Cardiac septum (tissue), 1 donor: ENCODE measurements at regions of chr12 and their contacts with region 1.

Region 1: DNA sequence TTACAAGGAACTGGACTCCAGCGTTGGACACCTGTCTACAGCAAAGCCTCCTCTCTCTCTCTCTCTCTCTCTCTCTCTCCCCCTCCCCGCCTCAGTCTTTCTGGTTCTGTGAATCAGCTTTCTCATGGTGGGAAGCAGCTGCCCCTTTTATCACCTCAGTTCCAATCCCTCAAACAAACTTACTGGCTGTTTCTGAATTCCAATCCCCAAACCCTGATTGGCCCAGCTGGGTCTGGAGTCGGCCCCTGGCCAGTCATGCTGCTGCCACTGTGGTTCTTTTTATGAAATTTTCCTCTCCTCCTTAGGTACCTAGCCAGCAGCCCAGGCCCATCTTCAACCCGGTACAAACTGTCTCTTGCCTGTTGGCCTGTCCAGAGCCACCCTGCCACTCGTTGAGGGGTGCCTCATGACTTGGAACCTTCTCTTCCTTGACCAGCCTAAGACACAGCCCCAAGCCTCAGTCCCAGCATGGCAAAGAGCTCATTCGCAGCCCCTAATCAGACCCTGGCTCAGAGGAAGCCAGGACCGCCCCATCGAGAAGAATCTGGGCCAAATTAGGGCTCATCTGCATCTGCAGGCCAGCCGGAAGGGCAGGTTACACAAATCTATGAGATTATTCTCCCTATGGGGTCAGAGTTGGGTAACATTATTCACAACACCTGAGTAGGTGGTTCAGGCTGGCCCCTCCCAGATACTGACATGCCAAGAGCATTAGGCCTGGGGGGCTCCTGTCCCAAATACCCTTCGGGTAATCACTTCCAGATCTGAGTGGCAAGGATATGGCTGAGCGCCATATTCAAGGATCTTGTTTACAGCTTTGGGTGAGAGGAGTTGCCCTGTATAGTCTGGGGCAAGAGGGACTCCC is 9.5 kb upstream of the MORN3 start:
- DNase-seq: no peak

Region 2: DNA sequence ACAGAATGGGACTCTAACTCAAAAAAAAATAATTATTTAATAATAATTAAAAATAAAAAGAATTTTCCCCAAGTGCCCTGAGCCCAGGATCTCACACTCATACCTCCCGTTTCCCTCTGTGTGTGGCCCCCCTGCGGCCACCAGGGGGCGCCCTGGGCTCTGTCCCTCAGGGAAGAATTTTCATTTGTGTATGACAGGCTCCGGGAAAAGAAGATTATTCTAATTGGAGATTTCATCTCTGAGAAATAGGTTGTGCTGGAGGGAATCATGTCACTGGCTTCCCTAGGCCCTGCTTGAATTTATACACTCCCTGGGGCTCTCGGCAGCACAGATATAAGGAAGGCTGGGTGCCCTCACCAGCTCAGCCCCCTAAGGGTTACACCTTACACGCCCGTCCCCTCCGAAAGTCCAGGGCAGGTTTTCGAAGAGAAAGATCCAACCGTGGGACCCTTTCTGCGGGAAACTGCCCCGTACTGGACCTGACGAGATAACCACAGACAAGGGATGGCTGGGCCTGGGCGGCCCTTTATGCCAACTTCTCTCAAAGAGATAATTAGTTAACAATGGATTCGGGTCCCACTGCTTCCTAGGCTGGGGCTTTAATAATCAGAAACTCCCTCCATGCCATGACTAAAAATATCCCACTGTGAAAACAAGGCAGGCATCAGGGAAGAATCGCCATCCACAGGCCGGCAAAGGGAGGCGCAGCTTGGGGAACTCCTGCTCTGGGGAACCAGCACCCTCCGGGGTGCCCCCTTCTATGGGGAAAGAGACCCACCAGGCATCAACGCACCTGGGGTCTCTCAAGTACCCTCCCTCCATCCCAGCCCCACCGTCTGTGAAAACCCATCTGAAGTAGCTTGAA is 178.8 kb before region 1 on chr12:
- intact Hi-C with region 1: loop called (anchors 2 kb)
- DNase-seq: peak; percentile 90

Region 3: GRCh38 chr12:121550974-121551634 is 127.8 kb before region 1 on chr12:
- intact Hi-C with region 1: loop called (anchors 2 kb)
- DNase-seq: no peak

Region 4: GRCh38 chr12:121626087-121626852 is 52.7 kb before region 1 on chr12 and contains the start of gene ORAI1:
- intact Hi-C with region 1: loop called (anchors 5 kb)
- DNase-seq: peak; percentile 99
- total RNA-seq, gene ORAI1: 8.0 TPM